Ovary (tissue), 10 donors: ENCODE measurements at regions of chr9 and their contacts with region 1.

Region 1: GRCh38 chr9:125407974-125408900 is 146.6 kb downstream of the GAPVD1 start:
- DNase-seq: peak; percentile 82 to 93 (median 89)
- H3K4me3 ChIP-seq: peak overlapping the region; percentile 70
- H3K27ac ChIP-seq: peak overlapping the region; percentile 75 to 89
- H3K4me1 ChIP-seq: peaks cover 6% of the 10 kb centered on the region
- H3K27me3 ChIP-seq: no peaks in the 10 kb centered on the region
- CTCF ChIP-seq: peak; percentile 87 to 89 (median 89)
- EP300 ChIP-seq: no peak
- POLR2A ChIP-seq: peak; percentile 20

Region 2: DNA sequence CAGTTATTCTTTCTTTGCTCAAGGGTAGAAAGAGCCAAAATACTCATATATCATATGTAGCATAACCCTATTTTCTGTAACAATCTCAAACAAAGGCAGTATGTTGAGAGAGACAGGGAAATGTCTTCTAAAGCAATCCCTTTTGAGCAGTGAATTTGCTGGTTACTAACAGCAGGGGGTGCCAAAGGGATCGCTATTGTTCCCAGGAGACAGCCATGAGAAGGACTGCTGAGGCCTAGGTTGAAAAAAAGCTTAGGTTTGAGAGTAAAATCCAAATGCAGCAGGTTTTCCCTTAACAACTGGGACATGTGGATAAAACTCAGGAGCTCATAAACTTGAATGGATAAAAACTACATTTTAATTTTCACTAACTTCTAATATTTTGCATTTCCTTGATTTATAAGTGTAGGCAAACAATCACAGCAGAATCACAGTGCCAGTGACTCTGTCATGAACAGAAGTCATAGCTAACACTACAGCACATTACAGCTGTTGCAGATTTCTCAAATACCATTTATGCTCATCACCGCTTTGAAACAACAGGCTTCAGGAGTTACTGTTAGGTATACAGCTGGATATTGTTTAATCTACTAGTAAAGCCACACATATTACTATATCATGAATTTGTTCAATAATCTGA is 150.3 kb after region 1 on chr9:
- intact Hi-C with region 1: loop called in 2 of 4 experiments (anchors 5 to 10 kb)
- DNase-seq: peak in 3 of 5 donors; percentile 52 to 73 (median 54)
- H3K4me3 ChIP-seq: no peak overlapping the region
- H3K27ac ChIP-seq: peak overlapping the region in 1 of 2 donors; percentile 18
- H3K4me1 ChIP-seq: no peaks in the 10 kb centered on the region
- H3K27me3 ChIP-seq: no peaks in the 10 kb centered on the region
- CTCF ChIP-seq: peak; percentile 48 to 69 (median 65)
- EP300 ChIP-seq: no peak
- POLR2A ChIP-seq: no peak

Region 3: GRCh38 chr9:125746017-125746773 is 338.0 kb after region 1 on chr9:
- intact Hi-C with region 1: loop called in 1 of 4 experiments (anchors 10 kb)
- DNase-seq: peak; percentile 92 to 95 (median 94)
- H3K4me3 ChIP-seq: peak overlapping the region; percentile 77
- H3K27ac ChIP-seq: peak overlapping the region; percentile 87 to 90
- H3K4me1 ChIP-seq: no peaks in the 10 kb centered on the region
- H3K27me3 ChIP-seq: no peaks in the 10 kb centered on the region
- CTCF ChIP-seq: no peak
- EP300 ChIP-seq: no peak
- POLR2A ChIP-seq: peak; percentile 40

Region 4: DNA sequence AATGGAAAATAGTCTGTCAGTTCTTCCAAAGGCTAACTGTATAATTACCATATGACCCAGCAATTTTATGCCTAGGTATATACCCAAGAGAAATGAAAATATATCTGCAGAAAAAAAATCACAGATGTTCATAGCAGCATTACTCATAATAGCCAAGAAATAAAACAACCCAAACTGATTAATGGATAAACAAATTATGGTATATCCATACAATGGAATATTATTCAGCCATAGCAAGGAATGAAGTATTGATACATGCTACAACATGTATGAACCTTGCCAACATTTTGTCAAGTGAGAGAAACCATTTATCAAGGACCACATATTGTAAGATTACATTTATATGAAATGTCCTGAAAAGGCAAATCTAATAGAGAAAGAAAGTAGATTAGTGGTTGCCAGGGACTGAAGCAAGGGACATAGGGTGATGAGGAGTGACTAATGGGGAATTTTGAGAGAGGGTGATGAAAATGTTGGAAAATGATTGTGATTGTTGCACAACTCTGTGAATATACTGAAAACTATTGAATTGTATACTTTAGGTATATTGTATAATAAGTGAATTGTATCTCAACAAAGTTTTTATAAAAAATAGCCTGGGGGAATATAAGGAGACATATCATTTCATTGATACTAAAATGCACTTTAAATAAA is 453.3 kb after region 1 on chr9:
- intact Hi-C with region 1: no loop called
- DNase-seq: no peak
- H3K4me3 ChIP-seq: no peak overlapping the region
- H3K27ac ChIP-seq: no peak overlapping the region
- H3K4me1 ChIP-seq: peaks cover 5% of the 10 kb centered on the region
- H3K27me3 ChIP-seq: no peaks in the 10 kb centered on the region
- CTCF ChIP-seq: no peak
- EP300 ChIP-seq: no peak
- POLR2A ChIP-seq: no peak

Region 5: GRCh38 chr9:126398403-126399058 is 990.3 kb after region 1 on chr9:
- intact Hi-C with region 1: loop called in 2 of 4 experiments (anchors 5 to 10 kb)
- DNase-seq: peak; percentile 62 to 87 (median 80)
- H3K4me3 ChIP-seq: no peak overlapping the region
- H3K27ac ChIP-seq: no peak overlapping the region
- H3K4me1 ChIP-seq: no peaks in the 10 kb centered on the region
- H3K27me3 ChIP-seq: no peaks in the 10 kb centered on the region
- CTCF ChIP-seq: peak; percentile 83 to 88 (median 88)
- EP300 ChIP-seq: no peak
- POLR2A ChIP-seq: no peak

Region 6: DNA sequence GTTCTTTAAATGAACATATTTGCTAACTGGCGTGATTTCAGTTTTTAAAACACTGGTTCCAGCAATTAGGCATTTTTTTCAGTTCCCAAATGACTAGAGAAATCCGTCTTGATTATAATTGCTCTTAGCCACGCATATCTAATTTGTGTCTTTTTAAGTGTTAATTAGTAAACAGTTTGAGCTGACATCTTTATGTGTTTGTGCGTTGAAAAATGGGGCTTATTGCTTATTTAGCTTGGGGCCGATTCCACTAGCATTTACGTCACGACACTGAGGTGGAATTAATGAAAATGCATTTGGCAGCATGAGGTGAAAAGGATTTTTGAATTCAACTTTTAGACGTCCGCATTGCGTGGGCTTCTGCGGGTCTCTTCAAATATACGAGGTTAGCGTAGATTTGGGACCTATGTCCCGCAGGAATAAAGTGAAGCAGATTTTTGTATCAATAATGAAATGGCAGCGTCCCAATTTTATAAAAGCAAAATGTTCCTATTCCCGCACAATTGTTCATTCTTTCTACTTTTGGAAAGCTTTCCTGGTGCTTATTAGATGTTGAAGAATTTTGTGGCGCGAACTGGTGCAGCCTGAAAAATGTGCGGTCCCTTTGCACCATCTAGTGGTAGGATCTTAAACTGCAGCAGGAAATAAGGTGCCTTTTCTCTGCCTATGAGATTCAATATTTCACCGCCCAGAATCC is 1082.8 kb after region 1 on chr9:
- intact Hi-C with region 1: loop called in 2 of 4 experiments (anchors 10 kb)
- DNase-seq: peak in 1 of 5 donors; percentile 65
- H3K4me3 ChIP-seq: no peak overlapping the region
- H3K27ac ChIP-seq: no peak overlapping the region
- H3K4me1 ChIP-seq: no peaks in the 10 kb centered on the region
- H3K27me3 ChIP-seq: no peaks in the 10 kb centered on the region
- CTCF ChIP-seq: peak; percentile 48 to 90 (median 86)
- EP300 ChIP-seq: no peak
- POLR2A ChIP-seq: no peak